H1 (cell line): ENCODE measurements at regions of chr7 and their contacts with region 1.

Region 1: DNA sequence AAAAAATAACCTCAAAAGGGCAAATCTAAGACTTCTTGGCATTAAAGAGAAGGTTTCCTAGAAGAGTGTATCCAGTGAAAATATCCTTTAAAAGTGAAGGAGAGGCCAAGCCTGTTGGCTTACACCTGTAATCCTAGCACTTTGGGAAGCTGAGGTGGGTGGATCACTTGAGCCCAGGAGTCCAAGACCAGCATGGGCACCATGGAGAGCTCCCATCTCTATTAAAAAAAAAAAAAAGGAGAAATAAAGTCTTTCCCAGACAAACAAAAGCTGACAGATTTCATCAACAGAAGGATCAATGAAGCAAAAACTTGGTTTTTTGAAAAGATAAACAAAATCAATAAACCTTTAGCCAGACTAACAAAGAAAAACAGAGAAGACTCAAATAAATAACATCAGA is 67.6 kb upstream of the ZNF800 start:
- DNase-seq: no peak
- H3K4me3 ChIP-seq: no peak overlapping the region
- H3K27ac ChIP-seq: no peak overlapping the region
- H3K4me1 ChIP-seq: no peaks in the 10 kb centered on the region
- H3K27me3 ChIP-seq: no peaks in the 10 kb centered on the region
- CTCF ChIP-seq: no peak
- EP300 ChIP-seq: no peak
- POLR2A ChIP-seq: no peak
- RAD21 ChIP-seq: no peak

Region 2: DNA sequence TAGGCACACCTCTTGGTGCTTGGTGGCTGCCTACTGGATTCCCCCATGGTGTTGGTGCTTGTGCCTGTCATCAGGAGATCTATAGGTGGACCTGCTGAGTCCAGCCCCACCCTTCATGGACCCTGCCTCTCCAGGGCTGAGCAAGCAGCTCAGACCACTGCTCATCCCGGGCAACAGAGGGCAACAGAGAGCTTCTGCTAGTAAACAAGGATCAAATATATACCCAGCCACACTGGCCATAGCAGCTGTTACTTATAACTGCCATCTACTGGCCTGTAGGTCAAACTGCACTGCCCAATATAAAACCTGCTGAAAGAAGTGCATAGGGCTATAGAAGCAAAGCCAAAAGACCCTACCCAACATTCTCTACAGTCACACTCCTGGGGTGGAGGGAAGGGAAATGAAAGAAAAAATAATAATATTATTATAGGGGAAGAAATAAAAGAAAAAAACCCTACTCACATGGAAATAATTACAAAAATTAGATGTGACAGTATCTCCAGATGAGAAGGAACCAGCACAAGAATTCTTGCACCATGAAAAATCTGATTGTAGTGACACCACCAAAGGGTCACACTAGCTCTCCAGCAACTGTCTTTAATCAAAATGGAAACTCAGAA is 12.6 kb before region 1 on chr7:
- CTCF ChIA-PET with region 1: interaction called, 26 read pairs
- POLR2A ChIA-PET with region 1: no interaction called
- DNase-seq: peak; percentile 64 to 67
- H3K4me3 ChIP-seq: no peak overlapping the region
- H3K27ac ChIP-seq: no peak overlapping the region
- H3K4me1 ChIP-seq: no peaks in the 10 kb centered on the region
- H3K27me3 ChIP-seq: no peaks in the 10 kb centered on the region
- CTCF ChIP-seq: peak; percentile 66 to 99 (median 91)
- EP300 ChIP-seq: no peak
- POLR2A ChIP-seq: no peak
- RAD21 ChIP-seq: peak; percentile 76 to 79